Posterior vena cava (tissue), 2 donors: ENCODE measurements at regions of chr5 and their contacts with region 1.

Region 1: DNA sequence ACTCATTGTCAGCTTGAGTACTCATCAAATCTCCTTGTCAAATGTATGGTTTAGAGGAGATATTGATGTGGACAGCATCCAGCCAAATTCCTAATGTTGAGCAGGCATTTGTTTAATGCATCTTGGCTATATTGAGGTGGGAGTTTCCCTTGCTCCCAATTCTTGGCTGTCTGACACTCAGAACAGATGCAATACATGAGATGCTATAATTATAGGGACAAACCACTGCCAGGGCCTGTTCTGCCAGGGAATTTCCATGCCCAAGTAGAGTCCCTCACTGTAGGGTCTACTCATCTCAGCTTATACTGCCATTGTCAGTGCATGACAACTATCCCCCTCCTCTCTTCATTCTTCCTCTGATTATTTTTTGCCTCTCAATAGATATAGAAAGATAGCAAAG is 392.0 kb upstream of the KCNN2 start:
- DNase-seq: no peak

Region 2: GRCh38 chr5:112977440-112977861 is 992.5 kb before region 1 on chr5:
- intact Hi-C with region 1: no loop called
- DNase-seq: no peak

Region 3: GRCh38 chr5:113897748-113898147 is 72.2 kb before region 1 on chr5:
- intact Hi-C with region 1: loop called in 1 of 2 experiments (anchors 2 kb)
- DNase-seq: no peak